Activated naive CD4-positive, alpha-beta T cell treated with anti-CD3 and anti-CD28 coated beads for 36 hours (primary cell): ENCODE measurements at regions of chr4 and their contacts with region 1.

Region 1: DNA sequence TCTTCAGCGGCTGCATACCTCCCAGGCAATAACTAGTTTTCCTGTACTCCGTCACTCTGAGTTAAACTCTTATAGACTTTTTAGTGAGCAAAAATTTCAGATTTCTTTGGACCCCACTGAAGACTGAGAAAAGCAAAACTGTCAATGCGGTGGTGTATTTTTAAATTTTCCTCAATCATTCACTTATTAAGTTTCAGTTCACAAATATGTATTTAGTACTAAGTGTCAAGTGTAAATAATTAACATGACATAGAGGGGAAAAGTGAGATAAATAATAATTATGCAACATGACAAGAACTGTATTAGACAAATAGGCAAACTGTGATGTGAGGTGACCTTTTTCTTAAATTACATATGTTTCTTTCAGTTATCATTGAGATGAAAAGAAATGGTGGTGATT is 124.4 kb downstream of the NAF1 start:
- DNase-seq: no peak
- H3K4me3 Mint-ChIP-seq: no peak overlapping the region
- H3K27ac Mint-ChIP-seq: no peak overlapping the region
- H3K4me1 Mint-ChIP-seq: no peaks in the 10 kb centered on the region
- H3K27me3 Mint-ChIP-seq: peaks cover 26% of the 10 kb centered on the region

Region 2: GRCh38 chr4:162016219-162016618 is 1026.1 kb before region 1 on chr4:
- CTCF ChIA-PET with region 1: no interaction called
- intact Hi-C with region 1: no loop called
- DNase-seq: no peak
- H3K4me3 Mint-ChIP-seq: no peak overlapping the region
- H3K27ac Mint-ChIP-seq: no peak overlapping the region
- H3K4me1 Mint-ChIP-seq: no peaks in the 10 kb centered on the region
- H3K27me3 Mint-ChIP-seq: no peaks in the 10 kb centered on the region

Region 3: GRCh38 chr4:162497564-162498167 is 544.6 kb before region 1 on chr4:
- CTCF ChIA-PET with region 1: interaction called, 6 read pairs
- intact Hi-C with region 1: loop called (anchors 1 kb)
- DNase-seq: peak; percentile 12
- H3K4me3 Mint-ChIP-seq: no peak overlapping the region
- H3K27ac Mint-ChIP-seq: no peak overlapping the region
- H3K4me1 Mint-ChIP-seq: no peaks in the 10 kb centered on the region
- H3K27me3 Mint-ChIP-seq: peaks cover 8% of the 10 kb centered on the region

Region 4: DNA sequence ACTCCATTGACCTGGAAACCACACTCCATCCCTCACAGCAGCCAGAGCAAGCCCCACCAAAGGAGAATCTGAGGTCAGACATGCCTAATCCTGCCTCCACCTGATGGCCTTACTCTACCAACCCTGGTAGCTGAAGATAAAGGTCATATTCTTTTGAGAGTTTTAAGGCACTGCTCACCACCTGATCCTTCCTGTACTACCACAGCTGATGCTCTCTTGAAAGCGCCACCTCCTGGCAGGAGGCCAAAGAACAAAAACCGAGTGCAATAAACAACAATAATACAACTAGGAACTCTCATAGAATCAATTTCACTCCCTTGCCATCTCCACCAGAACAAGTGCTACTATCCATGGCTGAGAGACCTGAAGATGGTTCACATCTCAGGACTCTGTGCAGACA is 177.2 kb before region 1 on chr4:
- CTCF ChIA-PET with region 1: no interaction called
- intact Hi-C with region 1: no loop called
- DNase-seq: peak; percentile 4
- H3K4me3 Mint-ChIP-seq: no peak overlapping the region
- H3K27ac Mint-ChIP-seq: no peak overlapping the region
- H3K4me1 Mint-ChIP-seq: no peaks in the 10 kb centered on the region
- H3K27me3 Mint-ChIP-seq: no peaks in the 10 kb centered on the region

Region 5: DNA sequence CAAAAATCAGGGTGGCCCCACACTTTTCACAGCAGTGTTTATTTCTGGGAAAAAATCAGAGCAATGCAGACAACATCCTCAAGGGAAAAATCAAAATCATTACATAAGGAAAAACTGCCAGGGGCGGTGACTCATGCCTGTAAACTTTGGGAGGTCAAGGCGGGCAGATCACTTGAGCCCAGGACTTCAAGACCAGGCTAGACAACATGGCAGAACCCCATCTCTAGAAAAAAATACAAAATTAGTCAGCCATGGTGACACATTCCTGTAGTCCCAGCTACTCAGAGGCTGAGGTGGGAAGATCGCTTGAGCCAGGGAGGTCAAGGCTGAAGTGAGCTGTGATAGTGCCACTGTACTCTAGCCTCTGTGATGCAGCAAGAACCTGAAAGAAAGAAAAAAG is 21.6 kb after region 1 on chr4:
- CTCF ChIA-PET with region 1: no interaction called
- intact Hi-C with region 1: no loop called
- DNase-seq: no peak
- H3K4me3 Mint-ChIP-seq: no peak overlapping the region
- H3K27ac Mint-ChIP-seq: no peak overlapping the region
- H3K4me1 Mint-ChIP-seq: no peaks in the 10 kb centered on the region
- H3K27me3 Mint-ChIP-seq: peaks cover 21% of the 10 kb centered on the region